SK-N-SH (cell line): ENCODE measurements at regions of chr7 and their contacts with region 1.

Region 1: GRCh38 chr7:158976849-158977593 is 120.7 kb downstream of the DYNC2I1 start:
- DNase-seq: peak; percentile 93
- H3K4me3 ChIP-seq: peak overlapping the region; percentile 42 to 55
- H3K27ac ChIP-seq: no peak overlapping the region; a peak in 1 of 4 replicates
- H3K4me1 ChIP-seq: peaks cover 0 to 14% of the 10 kb centered on the region in 2 experiments; a peak in 1 of 4 replicates
- H3K27me3 ChIP-seq: no peaks in the 10 kb centered on the region
- CTCF ChIP-seq: peak; percentile 99
- EP300 ChIP-seq: no peak
- RAD21 ChIP-seq: peak; percentile 92

Region 2: DNA sequence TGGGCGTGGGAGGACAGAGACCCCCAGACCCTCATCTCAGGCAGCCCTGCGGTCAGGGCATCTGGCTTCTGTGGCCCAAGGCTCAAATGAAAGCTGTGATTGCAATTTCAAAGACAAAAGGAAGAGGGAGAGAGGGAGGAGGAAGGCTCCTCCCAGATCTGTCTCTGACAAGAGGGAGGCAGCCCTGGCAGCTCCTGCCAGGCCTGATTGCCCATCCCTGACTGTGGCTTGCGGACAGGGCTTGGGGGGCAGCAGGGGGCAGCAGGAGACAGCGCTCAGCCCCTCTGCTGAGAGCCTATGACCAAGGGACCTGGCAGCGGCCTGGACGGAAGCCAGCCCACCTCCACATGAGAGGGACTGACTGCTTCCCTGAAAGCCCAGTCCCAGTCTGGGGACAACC is 481.2 kb before region 1 on chr7:
- CTCF ChIA-PET with region 1: interaction called, 15 read pairs
- POLR2A ChIA-PET with region 1: no interaction called
- DNase-seq: peak; percentile 98
- H3K4me3 ChIP-seq: no peak overlapping the region
- H3K27ac ChIP-seq: peak overlapping the region in 1 of 2 experiments; percentile 64; a peak in 2 of 4 replicates
- H3K4me1 ChIP-seq: peaks cover 0 to 24% of the 10 kb centered on the region in 2 experiments; a peak in 2 of 4 replicates
- H3K27me3 ChIP-seq: no peaks in the 10 kb centered on the region
- CTCF ChIP-seq: peak; percentile 18
- EP300 ChIP-seq: no peak
- RAD21 ChIP-seq: peak; percentile 91

Region 3: GRCh38 chr7:158885624-158886023 is 91.4 kb before region 1 on chr7:
- CTCF ChIA-PET with region 1: interaction called, 77 read pairs
- POLR2A ChIA-PET with region 1: no interaction called
- DNase-seq: peak; percentile 66
- H3K4me3 ChIP-seq: no peak overlapping the region
- H3K27ac ChIP-seq: no peak overlapping the region
- H3K4me1 ChIP-seq: peaks cover 0 to 5% of the 10 kb centered on the region in 2 experiments; a peak in 2 of 4 replicates
- H3K27me3 ChIP-seq: no peaks in the 10 kb centered on the region
- CTCF ChIP-seq: peak; percentile 60
- EP300 ChIP-seq: no peak
- RAD21 ChIP-seq: peak; percentile 80

Region 4: DNA sequence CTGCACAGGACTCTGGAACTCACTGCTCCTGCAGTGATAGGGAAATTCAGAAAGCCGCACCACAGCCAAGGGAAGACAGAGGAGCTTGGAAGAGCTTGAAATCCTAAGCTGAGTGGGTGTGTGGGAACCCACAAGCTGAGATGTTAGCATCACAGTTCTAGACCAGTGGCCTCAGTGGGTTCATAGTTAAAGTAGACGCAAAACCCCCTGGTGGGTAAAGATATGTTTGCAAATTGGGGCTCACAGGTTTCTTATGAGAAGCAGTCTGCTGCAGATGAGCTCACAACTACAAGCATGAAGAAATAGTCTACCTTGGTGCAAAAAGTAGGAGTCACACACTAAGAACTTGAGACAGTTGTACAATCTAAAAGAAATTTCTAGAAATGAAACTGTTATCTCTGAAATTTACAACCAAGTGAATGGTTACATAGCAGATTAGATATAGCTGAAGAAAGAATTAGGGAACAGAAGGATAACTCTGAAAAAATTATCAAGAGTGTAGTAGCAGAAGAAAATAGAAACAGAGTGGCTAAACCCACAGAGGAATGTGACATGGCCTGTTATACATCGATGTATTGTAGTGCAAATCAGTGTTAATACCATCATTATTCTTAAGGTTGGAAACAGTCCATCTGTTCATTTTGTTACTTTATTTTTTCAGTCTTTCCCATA is 43.4 kb before region 1 on chr7:
- CTCF ChIA-PET with region 1: interaction called, 11 read pairs
- POLR2A ChIA-PET with region 1: no interaction called
- DNase-seq: no peak
- H3K4me3 ChIP-seq: no peak overlapping the region; a peak in 1 of 4 replicates
- H3K27ac ChIP-seq: no peak overlapping the region
- H3K4me1 ChIP-seq: no peaks in the 10 kb centered on the region
- H3K27me3 ChIP-seq: no peaks in the 10 kb centered on the region
- CTCF ChIP-seq: no peak
- EP300 ChIP-seq: no peak
- RAD21 ChIP-seq: no peak

Region 5: GRCh38 chr7:158991824-158992583 is 15.0 kb after region 1 on chr7:
- CTCF ChIA-PET with region 1: interaction called, 31 read pairs
- POLR2A ChIA-PET with region 1: interaction called, 3 read pairs
- DNase-seq: peak; percentile 45
- H3K4me3 ChIP-seq: no peak overlapping the region
- H3K27ac ChIP-seq: no peak overlapping the region
- H3K4me1 ChIP-seq: no peaks in the 10 kb centered on the region
- H3K27me3 ChIP-seq: peaks cover 14% of the 10 kb centered on the region; the same call in 1 of the 2 replicates
- CTCF ChIP-seq: no peak
- EP300 ChIP-seq: no peak
- RAD21 ChIP-seq: no peak

Region 6: GRCh38 chr7:159030490-159031134 is 53.6 kb after region 1 on chr7:
- CTCF ChIA-PET with region 1: interaction called, 18 read pairs
- POLR2A ChIA-PET with region 1: no interaction called
- DNase-seq: peak; percentile 97
- H3K4me3 ChIP-seq: peak overlapping the region; percentile 16 to 42; a peak in 3 of 4 replicates
- H3K27ac ChIP-seq: no peak overlapping the region; a peak in 1 of 4 replicates
- H3K4me1 ChIP-seq: peaks cover 0 to 11% of the 10 kb centered on the region in 2 experiments; a peak in 1 of 4 replicates
- H3K27me3 ChIP-seq: no peaks in the 10 kb centered on the region
- CTCF ChIP-seq: no peak
- EP300 ChIP-seq: no peak
- RAD21 ChIP-seq: peak; percentile 24

Region 7: GRCh38 chr7:159126311-159127260 is 149.6 kb after region 1 on chr7:
- CTCF ChIA-PET with region 1: no interaction called
- POLR2A ChIA-PET with region 1: no interaction called
- DNase-seq: no peak
- H3K4me3 ChIP-seq: no peak overlapping the region
- H3K27ac ChIP-seq: no peak overlapping the region
- H3K4me1 ChIP-seq: no peaks in the 10 kb centered on the region; a peak in 1 of 4 replicates
- H3K27me3 ChIP-seq: no peaks in the 10 kb centered on the region
- CTCF ChIP-seq: no peak
- EP300 ChIP-seq: no peak
- RAD21 ChIP-seq: no peak